ENCODE measurements at regions of chr1 and their contacts with region 1.

Region 1: GRCh38 chr1:174938281-174939007 is 61.3 kb upstream of the CACYBP start:
- DNase-seq: no peak
- H3K4me3 Mint-ChIP-seq: no peak overlapping the region
- H3K27ac Mint-ChIP-seq: no peak overlapping the region
- H3K4me1 Mint-ChIP-seq: peaks cover 7% of the 10 kb centered on the region
- H3K27me3 Mint-ChIP-seq: no peaks in the 10 kb centered on the region

Region 2: GRCh38 chr1:174976436-174977108 is 38.1 kb after region 1 on chr1:
- CTCF ChIA-PET with region 1: interaction called, 4 read pairs
- intact Hi-C with region 1: loop called (anchors 2 kb)
- DNase-seq: peak; percentile 36
- H3K4me3 Mint-ChIP-seq: no peak overlapping the region
- H3K27ac Mint-ChIP-seq: no peak overlapping the region
- H3K4me1 Mint-ChIP-seq: peaks cover 40% of the 10 kb centered on the region
- H3K27me3 Mint-ChIP-seq: no peaks in the 10 kb centered on the region

Measured in activated naive CD4-positive, alpha-beta T cell treated with anti-CD3 and anti-CD28 coated beads for 36 hours (primary cell).